Aorta (tissue), 5 donors: ENCODE measurements at regions of chr22 and their contacts with region 1.

Region 1: DNA sequence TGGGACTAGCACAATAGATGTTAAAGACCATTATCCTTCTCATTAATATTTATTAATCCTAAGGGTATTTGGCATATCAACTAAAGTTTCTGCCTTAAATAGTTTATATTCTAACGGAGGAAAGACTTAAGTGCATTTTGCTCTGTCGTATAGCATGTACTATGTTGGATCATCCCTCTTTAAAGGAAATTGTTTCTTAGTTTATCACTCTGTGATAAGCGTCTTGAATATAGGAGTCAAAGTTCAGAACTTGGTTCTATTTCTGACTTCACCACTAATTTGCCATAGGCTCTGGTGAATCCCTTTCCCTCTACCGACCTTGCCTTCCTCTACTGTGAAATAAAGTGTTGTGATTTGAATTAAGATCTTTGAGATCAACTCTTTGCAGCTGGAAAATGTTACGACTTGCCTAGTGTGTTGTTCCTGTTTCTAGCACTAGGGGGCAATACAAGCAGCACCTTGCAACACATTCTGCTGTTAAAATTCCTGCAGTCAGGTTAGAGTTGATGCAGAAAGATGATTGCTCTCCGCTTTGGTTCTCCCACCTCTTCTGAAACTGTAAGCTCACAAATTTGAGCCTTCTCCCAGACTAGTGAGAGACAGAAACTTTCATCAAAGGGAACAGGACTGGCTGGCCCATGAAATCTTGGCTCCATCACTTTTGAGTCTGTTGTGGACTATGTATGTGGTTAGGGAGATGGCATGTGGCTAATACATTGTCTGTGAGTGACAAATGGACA is 27.8 kb upstream of the ZNRF3 start:
- DNase-seq: no peak
- ATAC-seq: peak; percentile 83
- H3K4me3 ChIP-seq: no peak overlapping the region
- H3K27ac ChIP-seq: no peak overlapping the region
- H3K4me1 ChIP-seq: no peaks in the 10 kb centered on the region
- H3K27me3 ChIP-seq: no peaks in the 10 kb centered on the region

Region 2: DNA sequence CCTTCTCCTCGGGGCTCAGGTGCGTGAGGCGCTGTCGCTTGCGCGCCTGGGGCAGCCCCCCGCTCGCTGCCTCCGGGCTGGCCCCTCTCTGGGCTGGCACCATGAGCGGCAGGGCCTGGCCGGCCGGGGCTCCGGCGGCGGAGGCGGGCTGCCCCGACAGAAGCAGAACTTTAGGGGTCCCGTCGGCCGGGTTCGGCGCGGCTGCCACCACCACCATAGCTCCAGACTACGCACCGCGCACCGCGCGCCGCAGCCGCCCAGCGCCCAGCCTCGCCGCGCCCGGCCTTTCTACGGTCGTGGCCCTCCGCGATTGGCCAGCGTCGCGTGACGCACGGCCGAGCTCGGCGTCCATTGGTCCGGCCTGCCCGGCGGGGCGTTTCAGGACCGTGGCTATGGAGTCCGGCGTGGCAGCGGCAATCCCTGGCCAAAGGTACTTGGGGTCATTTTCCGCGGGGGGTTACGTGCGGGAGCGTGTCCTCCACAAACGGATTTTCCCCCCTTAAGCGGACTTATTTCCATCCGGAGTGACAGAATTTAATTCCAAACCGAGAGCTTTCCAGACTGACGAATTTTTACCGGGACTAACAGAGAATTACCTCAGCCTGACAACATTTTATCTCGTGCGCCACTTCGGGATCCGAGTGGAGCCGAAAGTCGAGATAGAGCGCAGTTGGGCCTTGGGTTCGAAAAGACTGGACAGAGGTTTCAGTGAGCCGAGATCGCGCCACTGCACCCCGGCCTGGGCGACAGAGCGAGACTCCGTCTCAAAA is 55.0 kb before region 1 on chr22 and contains the start of gene XBP1:
- intact Hi-C with region 1: no loop called
- DNase-seq: peak; percentile 97 to 98
- ATAC-seq: peak; percentile 98
- H3K4me3 ChIP-seq: peak within 1 kb of the TSS; percentile 83 to 91
- H3K27ac ChIP-seq: peak within 1 kb of the TSS; percentile 97 to 100
- H3K4me1 ChIP-seq: peaks cover 0 to 4% of the 10 kb centered on the region in 2 donors
- H3K27me3 ChIP-seq: no peaks in the 10 kb centered on the region
- total RNA-seq, gene XBP1: 118 to 143 TPM

Region 3: DNA sequence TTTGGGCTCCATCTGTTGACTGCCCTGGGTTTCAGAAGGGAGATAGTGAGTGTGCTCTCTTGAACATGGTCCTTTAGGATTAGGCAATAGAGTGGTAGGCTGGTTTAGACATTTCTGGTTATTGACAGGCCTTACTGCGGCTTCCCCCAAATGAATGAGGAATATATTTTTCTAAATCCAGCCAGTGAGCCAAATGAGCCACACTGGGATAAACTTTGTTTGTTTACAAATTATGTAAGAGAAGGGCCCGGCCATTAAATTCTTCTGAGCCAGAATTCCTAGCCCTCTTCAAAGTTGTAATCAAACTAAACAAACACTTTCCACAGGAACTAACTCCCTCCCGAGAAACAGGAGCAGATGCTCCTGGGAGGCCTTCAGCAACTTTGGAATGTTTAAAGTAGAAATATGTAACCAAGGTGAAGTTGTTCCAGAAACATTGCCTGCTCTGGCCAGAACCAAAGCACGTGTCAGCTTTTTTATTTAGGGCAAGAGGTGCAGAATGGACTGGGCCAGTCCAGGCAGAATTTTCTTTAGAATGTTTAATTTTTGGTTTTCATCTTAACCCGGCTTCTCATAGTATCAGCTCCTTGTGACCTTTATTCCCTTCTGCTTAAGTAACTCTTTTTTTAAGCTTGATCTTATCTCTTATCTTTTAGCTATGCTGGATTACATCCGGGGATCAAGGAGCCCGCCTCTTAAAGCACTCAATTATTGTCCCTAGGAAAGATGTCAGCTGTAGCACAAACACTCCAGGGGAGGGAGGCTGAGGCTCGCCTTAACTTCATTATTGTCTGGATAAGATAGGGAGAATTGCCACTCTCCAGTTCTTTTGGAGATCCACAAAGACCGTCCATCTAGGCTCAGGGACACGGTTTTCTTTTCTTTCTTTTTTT is 56.5 kb after region 1 on chr22:
- intact Hi-C with region 1: loop called in 1 of 2 experiments (anchors 2 kb)
- DNase-seq: peak in 1 of 2 donors; percentile 9
- ATAC-seq: peak; percentile 73
- H3K4me3 ChIP-seq: no peak overlapping the region
- H3K27ac ChIP-seq: peak overlapping the region; percentile 97 to 100
- H3K4me1 ChIP-seq: peaks cover 13 to 14% of the 10 kb centered on the region in 2 donors
- H3K27me3 ChIP-seq: no peaks in the 10 kb centered on the region

Region 4: GRCh38 chr22:29040385-29041275 is 185.1 kb after region 1 on chr22:
- intact Hi-C with region 1: loop called (anchors 2 kb)
- DNase-seq: peak in 1 of 2 donors; percentile 64
- ATAC-seq: peak; percentile 90
- H3K4me3 ChIP-seq: no peak overlapping the region
- H3K27ac ChIP-seq: no peak overlapping the region
- H3K4me1 ChIP-seq: peaks cover 0 to 4% of the 10 kb centered on the region in 2 donors
- H3K27me3 ChIP-seq: no peaks in the 10 kb centered on the region

Region 5: GRCh38 chr22:29154364-29155048 is 299.0 kb after region 1 on chr22:
- intact Hi-C with region 1: loop called in 1 of 2 experiments (anchors 10 kb)
- DNase-seq: peak; percentile 84 to 94
- ATAC-seq: peak; percentile 82
- H3K4me3 ChIP-seq: no peak overlapping the region
- H3K27ac ChIP-seq: no peak overlapping the region
- H3K4me1 ChIP-seq: no peaks in the 10 kb centered on the region
- H3K27me3 ChIP-seq: no peaks in the 10 kb centered on the region

Region 6: DNA sequence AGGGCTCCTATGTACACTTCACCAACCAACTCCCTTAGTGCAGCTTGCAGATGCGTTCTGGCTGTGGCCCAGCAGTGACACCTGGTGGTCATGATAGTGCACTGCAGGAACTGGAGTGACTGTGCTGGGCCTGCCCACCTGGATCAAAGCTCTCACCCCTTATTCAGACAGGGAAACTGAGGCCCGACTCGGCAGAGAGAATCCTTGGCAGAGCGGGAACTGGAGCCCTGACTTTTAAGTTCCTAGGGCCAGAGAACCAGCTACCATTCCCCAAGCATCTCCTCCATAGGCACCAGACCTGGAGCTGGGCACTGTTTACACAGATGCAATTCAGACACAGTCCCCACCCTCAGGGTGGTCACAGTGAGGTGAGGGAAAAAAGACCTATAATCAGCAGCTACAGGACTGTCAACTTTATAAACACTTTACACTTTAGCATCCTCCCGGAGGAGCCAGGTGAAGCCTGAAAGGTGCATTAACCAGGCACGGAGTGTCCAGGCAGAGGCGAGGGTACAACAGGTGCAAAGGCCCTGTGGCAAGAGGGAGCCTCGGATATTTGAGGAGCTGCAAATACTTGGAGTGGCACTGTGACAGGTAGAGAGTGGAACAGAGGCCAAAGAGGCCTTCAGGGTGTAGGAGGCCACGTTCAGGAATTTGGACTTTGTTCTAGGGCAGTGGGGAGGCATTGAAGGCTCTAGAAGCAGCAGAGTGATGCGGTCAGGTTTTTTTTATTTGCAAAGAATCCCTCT is 390.3 kb after region 1 on chr22:
- intact Hi-C with region 1: loop called (anchors 10 kb)
- DNase-seq: peak; percentile 76 to 88
- ATAC-seq: peak; percentile 92
- H3K4me3 ChIP-seq: no peak overlapping the region
- H3K27ac ChIP-seq: no peak overlapping the region
- H3K4me1 ChIP-seq: no peaks in the 10 kb centered on the region
- H3K27me3 ChIP-seq: no peaks in the 10 kb centered on the region